A673 (cell line): ENCODE measurements at regions of chr2 and their contacts with region 1.

Region 1: DNA sequence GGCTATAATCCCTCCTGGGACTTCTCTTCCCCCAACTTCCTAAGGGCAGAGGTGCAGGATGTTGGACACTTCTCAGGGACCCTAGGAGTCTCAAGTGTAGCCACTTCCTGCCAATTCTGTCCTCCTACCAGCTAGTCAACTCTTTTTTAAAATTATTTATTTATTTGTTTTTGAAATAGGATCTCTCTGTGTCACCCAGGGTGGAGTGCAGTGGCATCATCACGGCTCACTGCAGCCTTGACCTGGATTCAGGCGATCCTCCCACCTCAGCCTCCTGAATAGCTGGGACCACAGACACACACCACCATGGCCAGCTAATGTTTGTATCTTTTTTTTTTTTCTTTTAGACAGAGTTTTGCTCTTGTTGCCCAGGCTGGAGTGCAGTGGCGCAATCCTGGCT is 11.5 kb downstream of the SFTPB start:
- DNase-seq: no peak
- H3K4me3 ChIP-seq: no peak overlapping the region
- H3K27ac ChIP-seq: no peak overlapping the region
- H3K4me1 ChIP-seq: no peaks in the 10 kb centered on the region
- H3K27me3 ChIP-seq: no peaks in the 10 kb centered on the region
- CTCF ChIP-seq: no peak

Region 2: GRCh38 chr2:85678794-85679672 is 22.6 kb after region 1 on chr2:
- CTCF ChIA-PET with region 1: interaction called, 14 read pairs
- POLR2A ChIA-PET with region 1: no interaction called
- intact Hi-C with region 1: no loop called
- DNase-seq: peak; percentile 87
- H3K4me3 ChIP-seq: no peak overlapping the region
- H3K27ac ChIP-seq: no peak overlapping the region
- H3K4me1 ChIP-seq: no peaks in the 10 kb centered on the region
- H3K27me3 ChIP-seq: no peaks in the 10 kb centered on the region
- CTCF ChIP-seq: peak; percentile 97